Posterior vena cava (tissue), 2 donors: ENCODE measurements at regions of chr6 and their contacts with region 1.

Region 1: GRCh38 chr6:56370561-56371211 is 123.3 kb upstream of the COL21A1 start:
- DNase-seq: no peak

Region 2: DNA sequence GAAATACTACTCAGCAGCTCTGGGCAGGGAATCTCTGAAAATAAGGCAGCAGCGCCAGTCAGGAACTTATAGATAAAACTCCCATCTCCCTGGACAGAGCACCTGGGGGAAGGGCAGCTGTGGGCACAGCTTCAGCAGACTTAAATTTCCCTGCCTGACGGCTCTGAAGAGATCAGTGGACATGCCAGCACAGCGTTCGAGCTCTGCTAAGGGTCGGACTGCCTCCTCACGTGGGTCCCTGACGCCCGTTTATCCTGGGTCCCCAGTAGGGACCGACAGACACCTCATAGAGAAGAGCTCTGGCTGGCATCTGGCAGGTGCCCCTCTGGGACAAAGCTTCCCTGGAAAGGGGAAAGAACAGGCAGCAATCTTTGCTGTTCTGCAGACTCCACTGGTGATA is 182.3 kb before region 1 on chr6:
- intact Hi-C with region 1: no loop called
- DNase-seq: no peak

Region 3: GRCh38 chr6:56314683-56315523 is 55.8 kb before region 1 on chr6:
- intact Hi-C with region 1: no loop called
- DNase-seq: no peak

Region 4: DNA sequence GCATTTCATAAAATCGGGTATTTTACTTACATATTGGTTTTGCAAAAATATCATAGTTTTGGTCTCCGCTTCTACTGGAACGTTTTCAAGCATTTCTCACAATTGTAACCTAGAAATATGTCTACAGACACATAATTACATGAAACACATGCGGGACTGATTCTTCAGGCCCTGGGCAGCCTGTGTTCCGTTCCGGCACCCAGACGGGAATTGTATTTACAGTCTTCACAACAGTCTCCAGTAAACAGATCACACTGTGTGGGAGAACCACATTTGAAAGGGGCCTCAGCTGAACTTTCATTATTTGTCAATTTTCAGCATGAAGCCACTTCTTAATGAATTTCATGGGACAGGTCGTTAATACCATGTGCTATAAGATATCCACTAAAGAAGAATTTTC is 75.1 kb after region 1 on chr6:
- intact Hi-C with region 1: loop called in 1 of 2 experiments (anchors 10 kb)
- DNase-seq: no peak